Activated CD4-positive, alpha-beta memory T cell treated with anti-CD3 and anti-CD28 coated beads for 36 hours (primary cell): ENCODE measurements at regions of chr4 and their contacts with region 1.

Region 1: GRCh38 chr4:101169044-101170014 is 178.0 kb downstream of the PPP3CA start:
- DNase-seq: peak; percentile 69
- H3K4me3 Mint-ChIP-seq: no peak overlapping the region
- H3K27ac Mint-ChIP-seq: no peak overlapping the region
- H3K4me1 Mint-ChIP-seq: peaks cover 9% of the 10 kb centered on the region
- H3K27me3 Mint-ChIP-seq: no peaks in the 10 kb centered on the region

Region 2: DNA sequence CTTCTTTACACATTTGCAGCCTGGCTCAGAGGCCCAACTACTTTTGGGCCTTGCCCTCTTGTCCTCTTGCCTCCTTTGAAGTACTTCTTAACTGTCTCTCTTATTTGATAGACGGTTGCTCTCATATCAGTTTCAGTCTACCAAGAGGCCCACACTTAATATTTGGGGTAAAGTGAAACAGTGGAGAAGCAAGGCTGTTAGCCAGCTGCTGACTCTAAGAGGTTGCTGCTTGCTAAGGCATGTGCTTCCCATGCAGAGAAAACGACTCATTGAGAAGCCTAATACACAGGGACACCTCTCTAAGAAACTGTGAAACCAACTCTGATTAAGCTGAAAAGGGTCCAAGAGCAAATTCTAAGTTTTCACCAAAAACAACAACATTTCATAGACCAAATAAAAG is 83.4 kb after region 1 on chr4:
- CTCF ChIA-PET with region 1: no interaction called
- POLR2A ChIA-PET with region 1: no interaction called
- intact Hi-C with region 1: no loop called
- DNase-seq: no peak
- H3K4me3 Mint-ChIP-seq: no peak overlapping the region
- H3K27ac Mint-ChIP-seq: no peak overlapping the region
- H3K4me1 Mint-ChIP-seq: peaks cover 23% of the 10 kb centered on the region
- H3K27me3 Mint-ChIP-seq: no peaks in the 10 kb centered on the region

Region 3: DNA sequence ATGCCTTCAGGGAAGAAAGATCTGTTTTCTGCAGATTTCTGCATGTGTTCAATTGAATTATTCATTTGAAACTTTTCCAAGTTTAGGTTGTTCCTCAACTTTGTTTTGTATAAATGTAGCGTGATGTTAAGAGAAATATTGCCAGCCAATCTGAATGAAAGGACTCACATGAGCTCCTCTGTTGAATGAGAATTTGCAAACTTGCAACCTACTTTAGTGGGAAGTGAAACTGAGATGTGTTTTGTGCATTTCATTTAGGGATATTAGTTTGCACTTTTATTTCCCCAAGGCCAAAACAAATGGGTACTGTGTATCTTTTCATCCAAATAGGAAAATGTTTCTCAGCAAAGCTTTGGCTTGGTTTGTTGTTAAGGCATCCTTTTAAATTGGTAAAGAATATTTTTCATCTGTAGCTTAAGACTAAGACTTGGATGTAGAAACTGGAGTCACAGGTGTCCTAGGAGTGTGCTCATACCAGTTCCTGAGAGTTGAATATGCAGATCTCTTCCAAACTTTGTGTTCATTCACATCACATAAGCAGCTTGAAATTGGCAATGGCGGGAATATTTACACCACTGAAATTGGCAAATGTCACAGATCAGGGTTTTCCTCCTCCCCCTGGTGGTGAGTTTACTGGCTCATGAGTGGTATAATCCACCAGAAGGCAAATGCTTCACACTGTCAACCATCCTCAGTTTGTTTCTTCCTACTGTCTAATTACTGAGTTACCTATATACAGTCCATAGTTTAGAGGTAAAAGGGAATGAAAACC is 427.6 kb after region 1 on chr4:
- CTCF ChIA-PET with region 1: interaction called, 42 read pairs
- POLR2A ChIA-PET with region 1: no interaction called
- intact Hi-C with region 1: loop called (anchors 1 kb)
- DNase-seq: peak; percentile 18
- H3K4me3 Mint-ChIP-seq: no peak overlapping the region
- H3K27ac Mint-ChIP-seq: no peak overlapping the region
- H3K4me1 Mint-ChIP-seq: no peaks in the 10 kb centered on the region
- H3K27me3 Mint-ChIP-seq: peaks cover 3% of the 10 kb centered on the region

Region 4: DNA sequence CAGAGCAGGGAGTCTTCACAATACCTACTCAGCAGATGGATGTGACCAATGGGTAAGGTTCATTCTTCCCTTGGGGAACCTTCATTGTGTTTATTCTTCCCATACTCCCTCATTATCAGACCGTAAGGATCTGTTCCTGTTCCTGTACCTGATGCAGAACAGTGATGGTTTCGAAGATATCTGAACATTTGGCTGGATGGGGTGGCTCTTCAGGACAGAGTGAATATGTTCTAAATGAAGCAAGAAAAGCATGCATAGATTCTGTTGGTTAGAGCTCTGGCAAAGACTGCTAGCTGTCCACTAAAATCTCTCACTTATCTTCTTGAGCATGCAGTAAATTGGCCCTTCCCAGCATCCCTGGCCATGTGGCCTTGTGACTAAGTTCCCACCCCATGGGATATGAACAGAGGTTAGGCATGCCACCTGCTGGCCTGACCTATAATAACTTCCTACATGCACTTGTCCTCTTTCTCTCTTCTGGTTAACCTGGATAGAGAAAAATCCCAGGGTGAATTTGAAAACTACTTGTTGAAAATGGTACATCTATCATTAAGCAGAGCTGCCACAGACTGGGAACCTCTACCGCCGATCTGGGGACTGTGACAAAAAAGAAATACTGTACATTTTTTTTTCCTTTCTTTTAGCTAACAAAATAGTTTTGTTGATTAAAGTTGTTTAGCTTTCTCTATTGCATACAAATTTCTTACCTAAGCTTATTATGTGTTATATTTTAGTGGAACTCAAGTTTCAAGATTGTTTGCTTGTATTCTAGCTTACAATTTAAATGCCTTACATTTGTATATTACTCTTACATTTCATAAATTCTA is 561.2 kb after region 1 on chr4:
- CTCF ChIA-PET with region 1: interaction called, 68 read pairs
- POLR2A ChIA-PET with region 1: no interaction called
- intact Hi-C with region 1: loop called (anchors 1 kb)
- DNase-seq: peak; percentile 68
- H3K4me3 Mint-ChIP-seq: no peak overlapping the region
- H3K27ac Mint-ChIP-seq: no peak overlapping the region
- H3K4me1 Mint-ChIP-seq: no peaks in the 10 kb centered on the region
- H3K27me3 Mint-ChIP-seq: peaks cover 6% of the 10 kb centered on the region

Region 5: DNA sequence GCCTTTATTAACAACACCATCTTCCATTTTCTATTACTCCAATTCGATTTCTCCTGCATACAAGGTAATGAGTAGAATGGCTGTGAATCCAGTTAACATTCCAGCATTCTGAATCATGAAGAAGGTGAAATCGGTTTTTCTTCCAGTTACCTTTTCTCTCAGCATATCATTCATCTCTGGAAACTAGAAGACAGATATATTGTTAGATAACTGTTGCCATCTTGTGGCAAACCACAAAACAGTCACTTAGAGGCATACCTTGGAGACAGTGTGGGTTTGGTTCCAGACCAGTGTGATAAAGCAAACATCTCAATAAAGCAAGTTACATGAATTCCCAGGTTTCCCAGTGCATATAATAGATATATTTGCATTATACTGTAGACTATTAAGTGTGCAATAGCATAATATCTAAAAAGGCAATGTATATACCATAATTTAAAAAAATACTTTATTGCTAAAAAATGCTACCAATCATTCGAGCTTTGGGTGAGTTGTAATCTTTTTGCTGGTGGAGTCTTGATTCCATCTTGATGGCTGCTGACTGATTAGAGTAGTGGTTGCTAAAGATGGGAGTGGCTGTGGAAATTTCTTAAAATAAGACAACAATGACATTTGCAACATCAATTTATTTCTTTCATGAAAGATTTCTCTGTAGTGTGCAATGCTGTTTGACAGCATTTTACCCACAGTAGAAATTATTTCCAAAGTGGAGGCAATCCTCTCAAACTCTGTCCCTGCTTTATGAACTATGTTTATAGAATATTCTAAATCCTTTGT is 1093.9 kb after region 1 on chr4:
- CTCF ChIA-PET with region 1: no interaction called
- POLR2A ChIA-PET with region 1: no interaction called
- intact Hi-C with region 1: loop called (anchors 10 kb)
- DNase-seq: peak; percentile 13
- H3K4me3 Mint-ChIP-seq: no peak overlapping the region
- H3K27ac Mint-ChIP-seq: no peak overlapping the region
- H3K4me1 Mint-ChIP-seq: peaks cover 10% of the 10 kb centered on the region
- H3K27me3 Mint-ChIP-seq: no peaks in the 10 kb centered on the region